Heart right ventricle (tissue), 16 donors: ENCODE measurements at regions of chr16 and their contacts with region 1.

Region 1: GRCh38 chr16:67719048-67719777 is at the start of gene GFOD2:
- DNase-seq: peak; percentile 98 to 99
- ATAC-seq: peak; percentile 99 to 100 (median 99)
- H3K4me3 ChIP-seq: peak within 1 kb of the TSS; percentile 81 to 100 (median 93)
- H3K27ac ChIP-seq: peak within 1 kb of the TSS; percentile 76 to 97 (median 92)
- H3K4me1 ChIP-seq: peaks cover 0 to 34% (median 24%) of the 10 kb centered on the region in 9 donors
- H3K27me3 ChIP-seq: no peaks in the 10 kb centered on the region
- CTCF ChIP-seq: peak in 1 of 9 donors; percentile 14
- total RNA-seq, gene GFOD2: 6.0 to 10.7 (median 8.2) TPM

Region 2: GRCh38 chr16:67683767-67684385 is 35.3 kb before region 1 on chr16:
- intact Hi-C with region 1: loop called in 3 of 10 experiments (anchors 5 kb)
- DNase-seq: no peak
- ATAC-seq: no peak
- H3K4me3 ChIP-seq: no peak overlapping the region
- H3K27ac ChIP-seq: peak overlapping the region in 3 of 10 donors; percentile 44 to 79 (median 79)
- H3K4me1 ChIP-seq: peaks cover 0 to 23% (median 16%) of the 10 kb centered on the region in 9 donors
- H3K27me3 ChIP-seq: no peaks in the 10 kb centered on the region
- CTCF ChIP-seq: no peak

Region 3: GRCh38 chr16:67767953-67768352 is 48.7 kb after region 1 on chr16:
- intact Hi-C with region 1: no loop called
- DNase-seq: no peak
- ATAC-seq: no peak
- H3K4me3 ChIP-seq: no peak overlapping the region
- H3K27ac ChIP-seq: no peak overlapping the region
- H3K4me1 ChIP-seq: peaks cover 0 to 15% (median 6%) of the 10 kb centered on the region in 9 donors
- H3K27me3 ChIP-seq: no peaks in the 10 kb centered on the region
- CTCF ChIP-seq: no peak

Region 4: DNA sequence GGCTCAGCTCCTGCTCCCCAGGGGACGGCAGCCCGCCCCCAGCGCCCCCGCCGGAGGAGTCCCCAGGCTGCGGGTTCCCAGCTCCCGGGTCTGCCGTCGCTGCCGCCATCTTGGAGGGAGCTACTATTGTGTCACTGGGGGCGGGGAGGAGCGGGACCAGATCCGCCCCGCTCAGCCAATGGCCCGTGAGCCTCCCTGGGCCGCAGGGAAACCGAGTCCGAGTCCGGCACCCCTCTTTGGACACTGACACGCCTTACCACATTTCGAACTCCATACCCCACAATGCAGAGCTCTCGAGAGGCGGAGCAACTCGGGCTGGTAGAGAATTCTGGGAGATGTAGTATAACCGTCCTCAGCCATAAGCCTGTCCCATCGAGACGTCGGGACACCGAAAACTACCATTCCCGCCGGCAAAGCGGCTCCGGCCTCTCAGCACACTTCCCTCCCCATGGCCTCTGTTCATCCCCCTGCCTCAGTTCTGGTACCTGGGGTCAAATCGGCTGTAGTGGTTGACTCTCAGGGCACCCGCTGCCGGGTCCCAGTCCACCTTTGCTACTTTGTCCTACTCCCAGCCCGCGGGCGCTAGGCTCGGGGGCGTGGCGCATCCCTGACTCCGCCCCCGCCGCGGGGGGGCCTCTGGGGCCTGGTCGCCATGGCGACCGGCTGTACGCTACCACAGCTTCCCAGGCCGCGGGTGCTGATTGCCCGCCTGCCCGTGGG is 87.4 kb after region 1 on chr16 and contains the starts of genes RANBP10 and TSNAXIP1:
- intact Hi-C with region 1: loop called in 2 of 10 experiments (anchors 1 to 5 kb)
- DNase-seq: peak; percentile 95 to 98
- ATAC-seq: peak; percentile 97 to 99 (median 98)
- H3K4me3 ChIP-seq: peak within 1 kb of the TSS; percentile 54 to 100 (median 91)
- H3K27ac ChIP-seq: peak within 1 kb of the TSS in 9 of 10 donors; percentile 77 to 94 (median 87)
- H3K4me1 ChIP-seq: peaks cover 8 to 39% (median 20%) of the 10 kb centered on the region in 9 donors
- H3K27me3 ChIP-seq: no peaks in the 10 kb centered on the region
- CTCF ChIP-seq: no peak
- total RNA-seq, gene RANBP10: 11.1 to 21.6 (median 15.6) TPM
- total RNA-seq, gene TSNAXIP1: 0.15 to 1.1 (median 0.48) TPM